ENCODE measurements at regions of chrX and their contacts with region 1.

Region 1: GRCh38 chrX:110450050-110450449 is 91.4 kb downstream of the RTL9 start:
- DNase-seq: peak; percentile 14 to 63
- ATAC-seq: peak in 2 of 3 donors; percentile 54 to 85
- H3K4me3 ChIP-seq: no peak overlapping the region
- H3K4me3 Mint-ChIP-seq: no peak overlapping the region
- H3K27ac ChIP-seq: no peak overlapping the region
- H3K27ac Mint-ChIP-seq: no peak overlapping the region
- H3K4me1 ChIP-seq: no peaks in the 10 kb centered on the region
- H3K4me1 Mint-ChIP-seq: no peaks in the 10 kb centered on the region
- H3K27me3 ChIP-seq: peaks cover 2% of the 10 kb centered on the region
- H3K27me3 Mint-ChIP-seq: peaks cover under 1 to 28% of the 10 kb centered on the region in 2 donors
- CTCF ChIP-seq: peak; percentile 43

Region 2: GRCh38 chrX:110402479-110403230 is 47.4 kb before region 1 on chrX:
- intact Hi-C with region 1: no loop called
- DNase-seq: no peak
- ATAC-seq: no peak
- H3K4me3 ChIP-seq: no peak overlapping the region
- H3K4me3 Mint-ChIP-seq: no peak overlapping the region
- H3K27ac ChIP-seq: no peak overlapping the region
- H3K27ac Mint-ChIP-seq: no peak overlapping the region
- H3K4me1 ChIP-seq: no peaks in the 10 kb centered on the region
- H3K4me1 Mint-ChIP-seq: no peaks in the 10 kb centered on the region
- H3K27me3 ChIP-seq: no peaks in the 10 kb centered on the region
- H3K27me3 Mint-ChIP-seq: peaks cover 2 to 61% of the 10 kb centered on the region in 2 donors
- CTCF ChIP-seq: no peak

Region 3: GRCh38 chrX:110563282-110563681 is 113.2 kb after region 1 on chrX:
- intact Hi-C with region 1: no loop called
- DNase-seq: no peak
- ATAC-seq: no peak
- H3K4me3 ChIP-seq: no peak overlapping the region
- H3K4me3 Mint-ChIP-seq: no peak overlapping the region
- H3K27ac ChIP-seq: no peak overlapping the region
- H3K27ac Mint-ChIP-seq: no peak overlapping the region
- H3K4me1 ChIP-seq: no peaks in the 10 kb centered on the region
- H3K4me1 Mint-ChIP-seq: no peaks in the 10 kb centered on the region
- H3K27me3 ChIP-seq: no peaks in the 10 kb centered on the region
- H3K27me3 Mint-ChIP-seq: no peaks in the 10 kb centered on the region
- CTCF ChIP-seq: no peak

Region 4: GRCh38 chrX:110847334-110847733 is 397.3 kb after region 1 on chrX:
- intact Hi-C with region 1: loop called (anchors 1 kb)
- DNase-seq: peak in 1 of 2 donors; percentile 63
- ATAC-seq: peak in 1 of 3 donors; percentile 66
- H3K4me3 ChIP-seq: no peak overlapping the region
- H3K4me3 Mint-ChIP-seq: no peak overlapping the region
- H3K27ac ChIP-seq: no peak overlapping the region
- H3K27ac Mint-ChIP-seq: no peak overlapping the region
- H3K4me1 ChIP-seq: no peaks in the 10 kb centered on the region
- H3K4me1 Mint-ChIP-seq: no peaks in the 10 kb centered on the region
- H3K27me3 ChIP-seq: no peaks in the 10 kb centered on the region
- H3K27me3 Mint-ChIP-seq: peaks cover 0 to under 1% of the 10 kb centered on the region in 2 donors
- CTCF ChIP-seq: peak; percentile 33